Activated T-helper 1 cell treated with anti-CD3 and anti-CD28 coated beads, Interleukin-12 subunit alpha, Interleukin-12 subunit beta, Interleukin-2, Interleukin-4 antibody, amounts not matched to agents 30 ng/mL and 10 ng/mL and 1 ng/mL, durations not matched to agents 14 hours and 24 hours and 36 hours (primary cell): ENCODE measurements at regions of chr18 and their contacts with region 1.

Region 1: GRCh38 chr18:54209471-54210180 is 14.8 kb downstream of the MBD2 start:
- DNase-seq: no peak
- H3K4me3 Mint-ChIP-seq: peak overlapping the region; percentile 5
- H3K27ac Mint-ChIP-seq: peak overlapping the region; percentile 85
- H3K4me1 Mint-ChIP-seq: peaks cover 70% of the 10 kb centered on the region
- H3K27me3 Mint-ChIP-seq: no peaks in the 10 kb centered on the region

Region 2: DNA sequence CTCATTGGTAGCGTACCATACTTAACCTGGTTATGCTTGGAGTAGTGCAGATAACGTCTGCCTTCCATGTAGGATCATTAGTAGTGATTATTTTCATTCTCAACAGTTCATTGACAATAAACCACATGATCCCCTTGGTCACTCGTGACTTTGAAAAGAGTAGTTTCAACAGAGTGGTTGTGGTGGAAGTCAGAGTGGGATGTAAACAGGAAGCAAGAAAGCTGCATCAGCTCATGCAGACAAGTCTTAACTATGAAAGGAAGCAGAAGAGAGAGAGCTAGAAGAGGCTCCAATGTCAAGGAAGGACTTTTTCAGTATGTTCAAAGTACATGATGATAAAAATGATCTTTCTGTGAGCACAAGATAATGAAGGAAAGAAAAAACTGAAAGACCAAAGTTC is 272.6 kb before region 1 on chr18:
- intact Hi-C with region 1: loop called (anchors 10 kb)
- DNase-seq: no peak
- H3K4me3 Mint-ChIP-seq: no peak overlapping the region
- H3K27ac Mint-ChIP-seq: peak overlapping the region; percentile 45
- H3K4me1 Mint-ChIP-seq: peaks cover 25% of the 10 kb centered on the region
- H3K27me3 Mint-ChIP-seq: no peaks in the 10 kb centered on the region

Region 3: GRCh38 chr18:54023471-54023870 is 186.2 kb before region 1 on chr18:
- intact Hi-C with region 1: loop called (anchors 10 kb)
- DNase-seq: no peak
- H3K4me3 Mint-ChIP-seq: no peak overlapping the region
- H3K27ac Mint-ChIP-seq: no peak overlapping the region
- H3K4me1 Mint-ChIP-seq: no peaks in the 10 kb centered on the region
- H3K27me3 Mint-ChIP-seq: peaks cover 5% of the 10 kb centered on the region

Region 4: GRCh38 chr18:54035927-54036326 is 173.7 kb before region 1 on chr18:
- intact Hi-C with region 1: no loop called
- DNase-seq: no peak
- H3K4me3 Mint-ChIP-seq: no peak overlapping the region
- H3K27ac Mint-ChIP-seq: no peak overlapping the region
- H3K4me1 Mint-ChIP-seq: no peaks in the 10 kb centered on the region
- H3K27me3 Mint-ChIP-seq: peaks cover 2% of the 10 kb centered on the region

Region 5: GRCh38 chr18:54100920-54101470 is 108.6 kb before region 1 on chr18:
- intact Hi-C with region 1: no loop called
- DNase-seq: no peak
- H3K4me3 Mint-ChIP-seq: no peak overlapping the region
- H3K27ac Mint-ChIP-seq: no peak overlapping the region
- H3K4me1 Mint-ChIP-seq: no peaks in the 10 kb centered on the region
- H3K27me3 Mint-ChIP-seq: peaks cover 1% of the 10 kb centered on the region

Region 6: DNA sequence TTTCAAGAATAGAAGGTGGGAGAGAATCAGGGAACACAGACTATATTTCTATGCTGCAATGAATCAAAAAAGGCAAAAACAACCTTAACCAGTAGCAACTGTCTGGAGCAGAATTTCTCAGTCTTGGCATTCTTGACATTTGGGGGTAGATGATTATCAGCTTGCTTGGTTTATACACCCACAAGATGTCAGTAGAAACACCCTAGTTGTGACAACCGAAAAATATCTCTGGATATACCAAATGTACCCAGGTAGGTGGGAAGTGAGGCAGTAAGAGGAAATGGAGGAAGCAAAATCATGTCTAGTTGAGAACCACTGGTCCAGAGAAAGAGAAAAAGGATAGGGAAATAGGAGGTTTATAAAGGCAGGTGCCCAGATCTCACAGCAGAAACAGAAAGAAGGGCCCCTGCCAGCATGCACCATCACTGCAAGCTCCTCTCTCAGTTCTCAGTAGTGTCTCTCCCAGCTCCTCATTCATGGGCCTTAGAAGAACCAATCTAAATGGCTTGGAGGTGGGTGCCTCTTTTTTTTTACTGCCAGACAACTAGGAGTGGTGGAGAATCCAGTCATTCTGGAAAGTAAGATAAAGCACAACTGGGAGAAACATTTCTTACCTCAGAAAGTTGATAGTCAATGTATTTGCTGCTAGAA is 35.5 kb before region 1 on chr18:
- intact Hi-C with region 1: loop called (anchors 1 kb)
- DNase-seq: no peak
- H3K4me3 Mint-ChIP-seq: peak overlapping the region; percentile 49
- H3K27ac Mint-ChIP-seq: peak overlapping the region; percentile 96
- H3K4me1 Mint-ChIP-seq: peaks cover 69% of the 10 kb centered on the region
- H3K27me3 Mint-ChIP-seq: no peaks in the 10 kb centered on the region

Region 7: GRCh38 chr18:54181856-54182602 is 27.6 kb before region 1 on chr18:
- intact Hi-C with region 1: loop called (anchors 1 kb)
- DNase-seq: no peak
- H3K4me3 Mint-ChIP-seq: no peak overlapping the region
- H3K27ac Mint-ChIP-seq: no peak overlapping the region
- H3K4me1 Mint-ChIP-seq: peaks cover 22% of the 10 kb centered on the region
- H3K27me3 Mint-ChIP-seq: no peaks in the 10 kb centered on the region

Region 8: DNA sequence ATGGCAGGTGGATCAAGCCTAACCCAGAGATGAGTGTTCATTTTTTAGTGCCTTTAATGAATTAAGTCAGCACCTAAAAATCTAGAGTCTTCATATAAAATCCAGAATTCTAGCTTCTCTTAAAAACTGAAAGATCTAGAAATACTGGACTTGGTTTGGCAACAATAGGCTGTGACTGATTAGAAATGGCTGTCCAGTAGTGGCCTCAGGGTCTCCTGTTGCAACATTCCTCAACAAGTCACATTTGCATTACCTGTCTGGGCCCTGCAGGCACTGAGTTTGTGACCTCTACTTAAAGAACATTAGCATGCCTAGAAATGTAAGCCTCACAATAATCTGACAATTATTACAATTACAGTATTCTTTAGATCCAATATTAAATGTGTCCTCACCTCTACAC is 18.3 kb before region 1 on chr18:
- intact Hi-C with region 1: loop called (anchors 2 kb)
- DNase-seq: no peak
- H3K4me3 Mint-ChIP-seq: no peak overlapping the region
- H3K27ac Mint-ChIP-seq: no peak overlapping the region
- H3K4me1 Mint-ChIP-seq: peaks cover 29% of the 10 kb centered on the region
- H3K27me3 Mint-ChIP-seq: no peaks in the 10 kb centered on the region

Region 9: GRCh38 chr18:54261894-54262293 is 52.3 kb after region 1 on chr18:
- intact Hi-C with region 1: loop called (anchors 1 kb)
- DNase-seq: no peak
- H3K4me3 Mint-ChIP-seq: peak overlapping the region; percentile 77
- H3K27ac Mint-ChIP-seq: peak overlapping the region; percentile 94
- H3K4me1 Mint-ChIP-seq: peaks cover 66% of the 10 kb centered on the region
- H3K27me3 Mint-ChIP-seq: no peaks in the 10 kb centered on the region